Activated naive CD4-positive, alpha-beta T cell treated with anti-CD3 and anti-CD28 coated beads for 36 hours (primary cell): ENCODE measurements at regions of chr20 and their contacts with region 1.

Region 1: DNA sequence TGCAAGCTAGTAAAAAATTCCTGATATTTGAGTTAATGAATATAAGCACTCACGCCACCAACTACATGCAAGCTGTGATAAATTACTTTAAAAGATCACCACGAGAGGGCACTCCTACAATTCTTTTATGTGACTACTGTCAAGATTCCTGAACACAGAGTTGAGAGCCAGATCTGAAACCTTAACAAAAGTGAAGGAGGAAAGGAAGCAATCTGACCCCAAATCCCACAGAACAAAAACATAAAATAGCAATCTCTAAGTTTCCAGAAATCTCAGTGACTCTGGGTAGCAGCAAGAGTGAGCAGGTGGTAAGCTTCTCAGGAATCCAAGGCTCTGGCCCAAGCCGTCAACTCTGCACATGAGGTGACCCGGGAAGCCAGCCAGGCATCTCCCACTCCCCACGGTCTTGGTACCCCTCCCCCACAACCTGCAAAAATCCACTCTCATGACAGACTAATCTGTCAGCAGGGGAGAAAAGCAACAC is 55.1 kb downstream of the STAU1 start:
- DNase-seq: peak; percentile 11
- H3K4me3 Mint-ChIP-seq: no peak overlapping the region
- H3K27ac Mint-ChIP-seq: no peak overlapping the region
- H3K4me1 Mint-ChIP-seq: peaks cover 3% of the 10 kb centered on the region
- H3K27me3 Mint-ChIP-seq: no peaks in the 10 kb centered on the region

Region 2: GRCh38 chr20:48846498-48847485 is 286.2 kb before region 1 on chr20:
- CTCF ChIA-PET with region 1: no interaction called
- intact Hi-C with region 1: no loop called
- DNase-seq: peak; percentile 87
- H3K4me3 Mint-ChIP-seq: no peak overlapping the region
- H3K27ac Mint-ChIP-seq: peak overlapping the region; percentile 78
- H3K4me1 Mint-ChIP-seq: peaks cover 15% of the 10 kb centered on the region
- H3K27me3 Mint-ChIP-seq: no peaks in the 10 kb centered on the region

Region 3: GRCh38 chr20:49207076-49207475 is 74.0 kb after region 1 on chr20:
- CTCF ChIA-PET with region 1: interaction called, 10 read pairs
- intact Hi-C with region 1: loop called (anchors 1 kb)
- DNase-seq: peak; percentile 52
- H3K4me3 Mint-ChIP-seq: no peak overlapping the region
- H3K27ac Mint-ChIP-seq: no peak overlapping the region
- H3K4me1 Mint-ChIP-seq: no peaks in the 10 kb centered on the region
- H3K27me3 Mint-ChIP-seq: no peaks in the 10 kb centered on the region

Region 4: DNA sequence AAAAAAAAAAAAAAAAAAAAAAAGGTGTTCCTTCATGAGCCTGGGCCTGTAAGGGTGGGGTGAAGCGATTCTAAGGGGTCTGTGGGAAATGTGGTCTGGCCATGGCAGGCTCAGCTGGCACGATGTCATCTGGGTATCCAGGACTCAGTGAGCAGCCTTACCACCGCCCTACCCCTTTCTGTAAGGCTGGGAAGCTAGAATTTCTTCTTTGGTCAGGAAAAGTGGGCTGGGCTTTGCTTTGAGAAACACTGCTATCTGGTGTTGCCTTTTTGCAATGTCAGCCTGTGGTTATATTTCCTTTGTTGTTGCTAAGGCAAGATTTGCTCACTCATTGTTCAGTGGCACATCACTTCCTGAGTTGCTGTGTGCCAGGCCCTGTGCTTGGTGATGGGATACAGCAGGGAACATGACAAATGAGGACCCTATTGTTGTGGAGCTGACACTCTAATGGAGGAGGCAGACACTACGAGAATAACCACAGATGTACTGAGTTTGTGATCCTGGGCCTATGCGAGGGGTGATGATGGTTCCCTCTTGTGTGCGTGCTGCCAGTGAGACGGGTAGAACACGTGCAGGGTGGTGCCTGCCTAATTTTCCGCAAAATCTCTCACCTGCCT is 190.7 kb after region 1 on chr20:
- CTCF ChIA-PET with region 1: no interaction called
- intact Hi-C with region 1: loop called (anchors 5 kb)
- DNase-seq: peak; percentile 49
- H3K4me3 Mint-ChIP-seq: no peak overlapping the region
- H3K27ac Mint-ChIP-seq: no peak overlapping the region
- H3K4me1 Mint-ChIP-seq: peaks cover 18% of the 10 kb centered on the region
- H3K27me3 Mint-ChIP-seq: peaks cover 27% of the 10 kb centered on the region